Activated CD8-positive, alpha-beta memory T cell treated with anti-CD3 and anti-CD28 coated beads, Interleukin-2, amount 10 ng/mL, durations not matched to agents 7 days and 5 days (primary cell): ENCODE measurements at regions of chr11 and their contacts with region 1.

Region 1: GRCh38 chr11:46352063-46352841 is 5.0 kb downstream of the DGKZ start:
- DNase-seq: peak; percentile 79
- ATAC-seq: peak; percentile 26
- H3K4me3 Mint-ChIP-seq: peak overlapping the region; percentile 71
- H3K27ac Mint-ChIP-seq: peak overlapping the region; percentile 59
- H3K4me1 Mint-ChIP-seq: peaks cover 68% of the 10 kb centered on the region
- H3K27me3 Mint-ChIP-seq: no peaks in the 10 kb centered on the region

Region 2: GRCh38 chr11:46279126-46280099 is 72.8 kb before region 1 on chr11:
- CTCF ChIA-PET with region 1: no interaction called
- DNase-seq: no peak
- ATAC-seq: no peak
- H3K4me3 Mint-ChIP-seq: no peak overlapping the region
- H3K27ac Mint-ChIP-seq: no peak overlapping the region
- H3K4me1 Mint-ChIP-seq: no peaks in the 10 kb centered on the region
- H3K27me3 Mint-ChIP-seq: peaks cover 74% of the 10 kb centered on the region

Region 3: DNA sequence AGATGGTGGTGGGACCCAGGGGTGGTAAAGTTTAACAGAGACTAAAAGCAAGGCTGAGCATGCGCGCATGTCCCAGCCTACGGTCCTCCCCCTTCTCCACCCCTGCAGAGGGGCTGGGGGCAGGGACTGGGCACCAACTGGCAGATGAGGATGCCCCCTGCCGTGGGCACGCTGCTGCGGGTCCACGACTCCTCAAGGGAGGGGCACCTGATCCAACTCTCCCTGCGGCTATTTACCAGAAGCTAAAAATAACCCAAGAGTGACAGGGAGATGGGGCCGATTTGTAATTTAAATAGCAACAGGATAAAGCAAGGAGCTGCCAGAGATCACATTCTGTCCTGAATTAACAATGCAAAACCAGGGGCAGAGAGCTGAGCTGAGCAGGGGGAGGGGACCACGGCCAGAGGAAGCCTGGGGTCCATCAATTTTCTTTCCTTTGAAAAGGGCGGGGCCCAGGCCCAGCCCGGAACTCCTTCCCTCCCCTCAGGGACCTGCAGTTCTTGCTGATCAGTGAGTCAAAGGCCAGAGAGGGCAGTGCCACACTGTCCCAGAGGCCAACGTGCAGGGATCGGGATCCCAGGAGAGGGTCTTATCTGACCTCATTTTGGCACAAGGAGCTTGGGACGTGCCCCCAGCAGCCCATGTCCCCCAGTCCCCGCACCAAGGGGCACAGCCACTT is 13.1 kb before region 1 on chr11:
- CTCF ChIA-PET with region 1: interaction called, 444 read pairs
- DNase-seq: no peak
- ATAC-seq: no peak
- H3K4me3 Mint-ChIP-seq: no peak overlapping the region
- H3K27ac Mint-ChIP-seq: no peak overlapping the region
- H3K4me1 Mint-ChIP-seq: peaks cover 15% of the 10 kb centered on the region
- H3K27me3 Mint-ChIP-seq: peaks cover 32% of the 10 kb centered on the region

Region 4: GRCh38 chr11:46392421-46393230 is 40.4 kb after region 1 on chr11:
- CTCF ChIA-PET with region 1: interaction called, 16 read pairs
- DNase-seq: peak; percentile 85
- ATAC-seq: peak; percentile 84
- H3K4me3 Mint-ChIP-seq: peak overlapping the region; percentile 51
- H3K27ac Mint-ChIP-seq: no peak overlapping the region
- H3K4me1 Mint-ChIP-seq: peaks cover 32% of the 10 kb centered on the region
- H3K27me3 Mint-ChIP-seq: peaks cover 46% of the 10 kb centered on the region

Region 5: GRCh38 chr11:47004595-47005033 is 652.4 kb after region 1 on chr11:
- CTCF ChIA-PET with region 1: no interaction called
- DNase-seq: no peak
- ATAC-seq: no peak
- H3K4me3 Mint-ChIP-seq: no peak overlapping the region
- H3K27ac Mint-ChIP-seq: no peak overlapping the region
- H3K4me1 Mint-ChIP-seq: peaks cover 13% of the 10 kb centered on the region
- H3K27me3 Mint-ChIP-seq: no peaks in the 10 kb centered on the region